Activated naive CD8-positive, alpha-beta T cell treated with anti-CD3 and anti-CD28 coated beads, Interleukin-2, amount 10 ng/mL, durations not matched to agents 7 days and 5 days (primary cell): ENCODE measurements at regions of chr14 and their contacts with region 1.

Region 1: DNA sequence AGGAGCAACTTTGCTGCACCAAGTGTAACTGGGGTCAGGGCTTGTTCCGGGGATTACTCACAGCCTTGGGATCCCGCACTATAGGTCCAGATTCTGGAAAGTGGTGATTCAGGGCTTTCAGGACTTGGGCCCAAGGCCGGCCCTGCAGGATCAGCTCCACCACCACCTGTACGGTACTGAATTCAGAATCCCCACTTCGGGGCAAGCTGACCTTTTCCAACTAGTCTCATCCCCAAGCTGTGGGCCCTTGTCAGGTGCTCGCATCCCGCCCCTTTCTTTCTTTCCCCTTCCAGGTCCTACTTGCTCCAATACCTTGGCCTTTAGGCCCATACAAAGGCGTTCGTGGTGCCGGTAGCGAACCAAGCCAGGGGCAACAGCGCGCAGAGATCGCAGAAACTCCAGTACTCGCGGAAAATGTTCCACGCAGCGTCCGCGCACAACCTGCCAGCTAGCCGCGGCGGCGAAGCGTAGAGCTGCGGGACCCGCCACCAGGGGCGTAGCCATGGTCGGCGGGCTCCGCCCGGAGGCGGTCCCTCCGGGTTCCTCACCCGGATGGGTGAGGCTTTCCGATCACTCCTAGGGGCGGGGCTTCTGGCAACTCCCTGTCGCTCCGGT is 487 bp downstream of the TINF2 start:
- DNase-seq: peak; percentile 95
- ATAC-seq: peak; percentile 82
- H3K4me3 Mint-ChIP-seq: peak overlapping the region; percentile 85
- H3K27ac Mint-ChIP-seq: peak overlapping the region; percentile 99
- H3K4me1 Mint-ChIP-seq: peaks cover 42% of the 10 kb centered on the region
- H3K27me3 Mint-ChIP-seq: no peaks in the 10 kb centered on the region

Region 2: DNA sequence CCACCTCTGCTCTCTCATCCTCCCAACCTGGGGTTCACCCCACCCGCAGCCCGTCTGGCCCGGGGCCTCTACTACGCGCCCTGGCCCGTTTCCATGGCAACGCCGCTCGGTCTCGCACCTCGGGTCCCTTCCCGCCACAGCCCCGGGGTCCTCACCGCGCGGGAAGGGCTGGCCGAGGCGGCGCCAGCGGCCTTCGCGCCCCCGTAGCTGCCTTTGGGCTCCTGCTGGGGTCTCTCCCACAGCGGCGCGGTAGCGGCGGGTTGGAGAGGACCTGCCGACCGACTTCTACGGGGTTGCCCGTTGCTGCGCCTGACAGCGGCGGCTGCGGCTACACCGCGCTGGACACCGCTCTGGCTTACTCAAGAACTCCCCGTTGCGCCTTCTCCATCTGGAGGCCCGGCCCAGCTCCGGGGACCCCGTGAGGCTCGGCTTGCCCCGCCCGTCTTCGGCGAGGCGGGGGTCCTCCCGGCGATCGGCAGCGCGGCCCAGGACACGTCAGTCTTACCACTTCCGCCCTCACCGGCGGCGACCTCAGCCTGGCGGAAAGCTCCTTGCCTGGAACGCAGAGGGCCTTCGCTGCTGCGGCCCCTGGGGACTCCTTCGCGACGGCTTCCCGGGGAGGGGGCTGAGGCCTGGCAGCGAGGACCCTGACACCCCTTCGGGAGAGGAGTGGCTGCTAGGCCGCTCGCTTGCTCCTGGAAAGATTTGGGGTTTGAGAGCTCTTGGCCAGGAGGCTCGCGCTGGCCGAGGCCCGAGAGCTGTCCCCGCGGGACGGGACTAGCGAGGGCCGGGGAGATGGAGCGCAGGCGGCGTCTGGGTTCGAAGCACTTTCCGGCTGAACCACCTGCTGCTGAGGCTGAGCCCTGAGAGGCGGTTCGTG is 46.5 kb before region 1 on chr14 and contains the start of gene TM9SF1:
- POLR2A ChIA-PET with region 1: interaction called, 18 read pairs
- DNase-seq: peak; percentile 93
- ATAC-seq: peak; percentile 93
- H3K4me3 Mint-ChIP-seq: peak within 1 kb of the TSS; percentile 97
- H3K27ac Mint-ChIP-seq: peak within 1 kb of the TSS; percentile 96
- H3K4me1 Mint-ChIP-seq: peaks cover 42% of the 10 kb centered on the region
- H3K27me3 Mint-ChIP-seq: no peaks in the 10 kb centered on the region
- total RNA-seq, gene TM9SF1: 28.9 to 29.6 TPM

Region 3: GRCh38 chr14:24271134-24271833 is 29.3 kb after region 1 on chr14 and contains the start of gene RABGGTA:
- POLR2A ChIA-PET with region 1: interaction called, 66 read pairs
- DNase-seq: peak; percentile 91
- ATAC-seq: peak; percentile 88
- H3K4me3 Mint-ChIP-seq: peak within 1 kb of the TSS; percentile 95
- H3K27ac Mint-ChIP-seq: peak within 1 kb of the TSS; percentile 97
- H3K4me1 Mint-ChIP-seq: peaks cover 37% of the 10 kb centered on the region
- H3K27me3 Mint-ChIP-seq: no peaks in the 10 kb centered on the region
- total RNA-seq, gene RABGGTA: 42.1 to 48.8 TPM

Region 4: GRCh38 chr14:24299255-24300195 is 57.6 kb after region 1 on chr14 and contains the starts of genes DHRS1 and NOP9:
- POLR2A ChIA-PET with region 1: interaction called, 76 read pairs
- DNase-seq: peak; percentile 97
- ATAC-seq: peak; percentile 82
- H3K4me3 Mint-ChIP-seq: peak within 1 kb of the TSS; percentile 94
- H3K27ac Mint-ChIP-seq: peak within 1 kb of the TSS; percentile 95
- H3K4me1 Mint-ChIP-seq: peaks cover 41% of the 10 kb centered on the region
- H3K27me3 Mint-ChIP-seq: no peaks in the 10 kb centered on the region
- total RNA-seq, gene DHRS1: 36.0 to 41.9 TPM
- total RNA-seq, gene NOP9: 28.7 to 31.1 TPM

Region 5: DNA sequence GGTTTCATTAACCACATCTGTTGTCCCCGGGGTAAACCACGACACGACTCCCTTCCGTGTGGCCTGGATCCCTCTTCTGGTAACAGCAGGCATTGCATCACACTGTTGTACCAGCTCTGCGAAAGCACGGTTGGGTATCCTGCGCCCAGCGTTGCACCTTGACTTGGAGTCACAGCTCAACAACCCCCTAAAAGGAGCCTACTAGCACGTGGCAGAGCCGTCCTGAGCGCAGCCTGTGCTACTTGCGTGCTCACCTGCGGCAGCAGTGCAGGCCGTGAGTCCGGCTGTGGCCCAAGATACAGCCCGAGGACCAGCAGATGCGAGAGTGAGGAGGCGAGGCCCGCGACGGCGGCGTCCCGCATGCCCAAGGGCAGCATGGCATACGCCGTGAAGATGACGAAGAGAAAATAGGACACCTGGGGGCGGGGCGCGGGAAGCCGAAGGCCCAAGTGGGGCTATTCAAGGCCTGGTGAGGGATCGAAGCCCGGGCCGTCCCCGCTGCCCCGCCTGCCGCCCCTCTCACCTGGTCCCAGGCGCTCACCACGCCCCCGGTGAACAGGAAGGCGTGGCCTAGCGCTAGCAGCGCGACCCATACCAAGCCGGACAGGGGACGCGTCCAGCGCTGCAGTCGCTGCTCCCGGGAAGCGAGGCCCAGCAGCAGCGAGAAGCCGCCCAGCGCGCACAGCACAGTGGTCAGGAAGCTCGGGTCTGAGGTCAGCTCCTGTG is 90.5 kb after region 1 on chr14:
- POLR2A ChIA-PET with region 1: interaction called, 13 read pairs
- DNase-seq: peak; percentile 76
- ATAC-seq: peak; percentile 73
- H3K4me3 Mint-ChIP-seq: peak overlapping the region; percentile 82
- H3K27ac Mint-ChIP-seq: peak overlapping the region; percentile 77
- H3K4me1 Mint-ChIP-seq: peaks cover 46% of the 10 kb centered on the region
- H3K27me3 Mint-ChIP-seq: peaks cover 32% of the 10 kb centered on the region